Psoas muscle (tissue), 8 donors: ENCODE measurements at regions of chr11 and their contacts with region 1.

Region 1: DNA sequence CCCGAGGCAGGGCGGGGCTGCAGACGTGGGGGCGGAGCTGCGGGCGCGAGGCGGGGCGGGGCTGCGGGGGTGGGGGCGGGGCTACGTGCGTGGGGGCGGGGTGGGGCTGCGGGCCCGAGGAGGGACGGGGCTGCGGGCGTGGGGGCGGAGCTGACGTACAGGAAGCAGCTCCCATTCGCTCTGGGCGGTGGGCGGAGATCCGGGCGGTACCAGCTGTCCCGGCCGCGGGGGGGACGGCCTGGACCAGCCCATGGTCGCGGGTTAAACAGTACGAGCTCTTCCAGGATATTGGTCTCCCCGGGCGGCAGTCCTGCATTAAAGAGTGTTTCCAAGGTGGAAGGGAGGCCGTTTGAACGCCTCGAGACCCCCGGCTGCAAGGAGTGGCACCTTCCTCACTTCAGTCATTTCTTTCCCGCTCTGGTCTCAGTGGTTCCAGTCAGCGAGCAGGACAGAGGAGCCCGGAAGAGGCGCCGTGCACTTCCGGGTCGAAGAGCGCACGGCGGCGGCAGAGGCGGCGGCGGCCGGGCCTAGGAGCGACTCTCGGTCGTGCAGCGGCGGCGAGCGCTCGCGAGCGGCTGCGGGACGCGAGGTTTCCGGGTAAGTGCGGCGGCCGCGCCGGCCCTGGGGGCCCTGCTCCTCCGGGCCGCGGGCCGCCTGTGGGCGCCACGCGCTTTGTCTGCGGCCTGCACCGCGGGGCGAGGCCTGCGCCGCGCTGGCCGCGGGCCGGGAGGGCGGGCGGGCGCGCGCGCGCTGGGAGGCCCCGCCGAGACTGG is at the start of gene PHRF1:
- DNase-seq: peak; percentile 96 to 99
- ATAC-seq: peak; percentile 92 to 95 (median 93)
- H3K4me3 ChIP-seq: peak within 1 kb of the TSS; percentile 98
- H3K27ac ChIP-seq: peak within 1 kb of the TSS; percentile 97
- H3K4me1 ChIP-seq: peaks cover 47% of the 10 kb centered on the region
- H3K27me3 ChIP-seq: no peaks in the 10 kb centered on the region
- CTCF ChIP-seq: no peak
- total RNA-seq, gene PHRF1: 19.8 to 31.2 (median 25.0) TPM

Region 2: GRCh38 chr11:611001-611996 is 35.1 kb after region 1 on chr11:
- intact Hi-C with region 1: loop called in 1 of 2 experiments (anchors 2 kb)
- DNase-seq: no peak
- ATAC-seq: no peak
- H3K4me3 ChIP-seq: no peak overlapping the region
- H3K27ac ChIP-seq: peak overlapping the region; percentile 93
- H3K4me1 ChIP-seq: peaks cover 34% of the 10 kb centered on the region
- H3K27me3 ChIP-seq: no peaks in the 10 kb centered on the region
- CTCF ChIP-seq: no peak

Region 3: DNA sequence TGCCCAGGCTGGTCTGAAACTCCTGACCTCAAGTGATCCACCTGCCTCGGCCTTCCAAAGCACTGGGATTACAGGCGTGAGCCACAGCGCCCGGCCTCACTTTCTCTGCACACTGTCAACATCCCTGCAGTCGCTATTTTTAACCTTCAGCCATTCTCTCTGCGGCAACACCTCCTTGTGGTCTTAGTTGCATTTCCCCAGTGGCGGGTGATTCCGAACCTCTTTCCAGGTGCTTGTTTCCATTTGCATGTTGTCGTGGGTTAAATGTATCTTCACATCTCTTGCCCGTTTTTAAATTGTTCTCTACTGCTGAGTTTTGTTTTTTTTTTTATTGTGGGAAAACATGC is 53.0 kb after region 1 on chr11:
- intact Hi-C with region 1: loop called in 1 of 2 experiments (anchors 5 kb)
- DNase-seq: peak in 1 of 2 donors; percentile 86
- ATAC-seq: peak; percentile 78 to 86 (median 82)
- H3K4me3 ChIP-seq: no peak overlapping the region
- H3K27ac ChIP-seq: peak overlapping the region; percentile 90
- H3K4me1 ChIP-seq: peaks cover 45% of the 10 kb centered on the region
- H3K27me3 ChIP-seq: peaks cover 0 to 2% (median 0%) of the 10 kb centered on the region in 3 donors
- CTCF ChIP-seq: peak; percentile 7

Region 4: DNA sequence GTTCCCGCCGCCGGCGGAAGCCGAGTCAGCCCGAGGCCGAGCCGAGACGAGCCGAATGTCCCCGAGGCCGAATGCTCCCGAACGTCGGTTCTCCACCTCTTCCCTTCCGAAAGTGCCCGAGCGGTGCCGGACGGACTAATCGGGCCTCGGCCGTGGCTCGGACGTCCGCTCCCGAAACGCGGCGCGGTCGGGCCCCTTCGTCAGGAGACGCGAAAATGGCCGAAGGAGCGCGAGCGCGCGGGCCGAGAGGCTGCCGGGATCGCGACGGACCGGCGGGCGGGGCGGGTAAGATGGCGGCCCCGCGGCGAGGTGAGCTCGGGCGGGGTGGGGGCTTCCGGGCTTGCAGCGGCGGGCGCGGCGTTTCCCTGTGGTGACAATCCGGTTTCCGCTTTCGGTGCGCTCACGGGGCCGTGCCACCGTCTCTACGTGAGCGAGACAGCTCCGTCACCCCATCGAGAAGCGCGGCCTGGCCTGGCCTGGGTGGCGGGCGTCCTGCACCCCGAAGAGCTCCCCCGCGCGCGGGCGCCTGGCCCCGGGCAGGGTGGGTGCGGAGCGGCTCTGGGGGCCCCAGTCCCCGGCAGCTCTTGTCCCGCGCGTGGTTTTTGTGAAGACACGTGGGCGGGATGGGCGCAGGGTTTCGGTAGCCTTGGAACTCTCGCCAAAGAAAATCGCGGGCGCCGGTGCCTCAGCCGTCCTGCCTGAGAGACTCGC is 119.5 kb after region 1 on chr11 and contains the start of gene TMEM80:
- intact Hi-C with region 1: loop called in 1 of 2 experiments (anchors 10 kb)
- DNase-seq: peak; percentile 100
- ATAC-seq: peak; percentile 85 to 88 (median 88)
- H3K4me3 ChIP-seq: peak within 1 kb of the TSS; percentile 95
- H3K27ac ChIP-seq: peak within 1 kb of the TSS; percentile 100
- H3K4me1 ChIP-seq: peaks cover 41% of the 10 kb centered on the region
- H3K27me3 ChIP-seq: peaks cover 0 to 1% (median 0%) of the 10 kb centered on the region in 3 donors
- CTCF ChIP-seq: no peak
- total RNA-seq, gene TMEM80: 5.9 to 15.7 (median 9.7) TPM